Endothelial cell of umbilical vein (primary cell): ENCODE measurements at regions of chr4 and their contacts with region 1.

Region 1: GRCh38 chr4:138919094-138919936 is 96.3 kb upstream of the NOCT start:
- DNase-seq: peak; percentile 74
- H3K4me3 ChIP-seq: no peak overlapping the region
- H3K27ac ChIP-seq: no peak overlapping the region
- H3K4me1 ChIP-seq: no peaks in the 10 kb centered on the region
- H3K27me3 ChIP-seq: no peaks in the 10 kb centered on the region
- CTCF ChIP-seq: peak; percentile 72 to 75
- POLR2A ChIP-seq: no peak

Region 2: GRCh38 chr4:138522366-138522765 is 396.9 kb before region 1 on chr4:
- CTCF ChIA-PET with region 1: no interaction called
- POLR2A ChIA-PET with region 1: no interaction called
- dilution Hi-C with region 1: no loop called
- intact Hi-C with region 1: loop called (anchors 5 kb)
- DNase-seq: peak; percentile 21
- H3K4me3 ChIP-seq: no peak overlapping the region
- H3K27ac ChIP-seq: no peak overlapping the region
- H3K4me1 ChIP-seq: no peaks in the 10 kb centered on the region
- H3K27me3 ChIP-seq: no peaks in the 10 kb centered on the region
- CTCF ChIP-seq: peak; percentile 27 to 40
- POLR2A ChIP-seq: no peak

Region 3: GRCh38 chr4:138576684-138577083 is 342.6 kb before region 1 on chr4:
- CTCF ChIA-PET with region 1: interaction called, 10 read pairs
- POLR2A ChIA-PET with region 1: no interaction called
- dilution Hi-C with region 1: no loop called
- intact Hi-C with region 1: loop called (anchors 1 kb)
- DNase-seq: peak; percentile 57
- H3K4me3 ChIP-seq: no peak overlapping the region
- H3K27ac ChIP-seq: no peak overlapping the region
- H3K4me1 ChIP-seq: no peaks in the 10 kb centered on the region
- H3K27me3 ChIP-seq: peaks cover under 1 to 3% of the 10 kb centered on the region in 2 experiments
- CTCF ChIP-seq: peak; percentile 31 to 53
- POLR2A ChIP-seq: no peak

Region 4: GRCh38 chr4:138680989-138681604 is 238.2 kb before region 1 on chr4:
- CTCF ChIA-PET with region 1: interaction called, 4 read pairs
- POLR2A ChIA-PET with region 1: no interaction called
- dilution Hi-C with region 1: no loop called
- intact Hi-C with region 1: loop called (anchors 1 kb)
- DNase-seq: peak; percentile 58
- H3K4me3 ChIP-seq: no peak overlapping the region
- H3K27ac ChIP-seq: no peak overlapping the region
- H3K4me1 ChIP-seq: no peaks in the 10 kb centered on the region
- H3K27me3 ChIP-seq: peaks cover 24 to 48% of the 10 kb centered on the region in 2 experiments
- CTCF ChIP-seq: peak; percentile 72 to 76
- POLR2A ChIP-seq: no peak

Region 5: DNA sequence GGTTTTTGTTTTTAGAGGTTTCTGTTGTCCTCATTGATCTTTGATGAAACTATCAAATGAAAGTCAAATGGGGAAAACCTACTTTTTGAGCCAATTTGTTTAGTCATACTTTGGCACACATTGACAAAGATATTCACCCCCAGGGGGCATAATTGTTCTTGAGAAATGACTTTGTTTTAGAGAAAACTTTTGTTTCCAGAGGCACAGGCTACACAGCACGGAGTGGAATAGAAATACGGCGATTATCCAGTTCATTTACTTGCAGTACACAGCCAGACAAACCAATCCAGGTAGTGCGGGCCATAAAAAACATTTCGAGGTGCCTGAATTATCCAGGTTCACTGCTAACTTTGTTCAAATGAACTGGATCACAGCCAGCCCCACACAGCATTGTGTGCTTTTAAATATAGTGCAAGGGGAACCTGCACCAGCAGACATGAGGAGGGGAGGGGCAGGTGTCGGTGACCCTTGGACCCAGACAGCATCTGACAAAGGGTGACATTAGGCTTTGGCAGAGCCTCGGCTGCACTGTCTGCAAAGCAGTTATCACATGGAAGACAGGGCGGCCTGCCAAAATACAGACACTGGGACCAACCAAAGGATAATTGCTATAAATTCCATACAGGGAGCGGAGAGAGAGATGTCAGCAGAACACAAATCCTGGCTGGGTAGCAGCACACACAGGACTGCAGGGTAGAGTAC is 83.3 kb before region 1 on chr4:
- CTCF ChIA-PET with region 1: interaction called, 4 read pairs
- POLR2A ChIA-PET with region 1: no interaction called
- dilution Hi-C with region 1: no loop called
- intact Hi-C with region 1: loop called (anchors 1 kb)
- DNase-seq: peak; percentile 15
- H3K4me3 ChIP-seq: no peak overlapping the region
- H3K27ac ChIP-seq: no peak overlapping the region
- H3K4me1 ChIP-seq: no peaks in the 10 kb centered on the region
- H3K27me3 ChIP-seq: peaks cover 0 to 12% of the 10 kb centered on the region in 2 experiments
- CTCF ChIP-seq: no peak
- POLR2A ChIP-seq: no peak

Region 6: GRCh38 chr4:139453371-139454110 is 534.2 kb after region 1 on chr4:
- CTCF ChIA-PET with region 1: no interaction called
- POLR2A ChIA-PET with region 1: no interaction called
- dilution Hi-C with region 1: no loop called
- intact Hi-C with region 1: no loop called
- DNase-seq: peak; percentile 98
- H3K4me3 ChIP-seq: peak overlapping the region; percentile 91 to 99 (median 97)
- H3K27ac ChIP-seq: peak overlapping the region; percentile 89
- H3K4me1 ChIP-seq: peaks cover 45% of the 10 kb centered on the region
- H3K27me3 ChIP-seq: no peaks in the 10 kb centered on the region
- CTCF ChIP-seq: peak in 1 of 2 donors; percentile 4
- POLR2A ChIP-seq: peak; percentile 89